Activated CD4-positive, alpha-beta T cell treated with anti-CD3 and anti-CD28 coated beads, Interleukin-2, amount 10 ng/mL, durations not matched to agents 24 days and 14 days (primary cell): ENCODE measurements at regions of chr19 and their contacts with region 1.

Region 1: DNA sequence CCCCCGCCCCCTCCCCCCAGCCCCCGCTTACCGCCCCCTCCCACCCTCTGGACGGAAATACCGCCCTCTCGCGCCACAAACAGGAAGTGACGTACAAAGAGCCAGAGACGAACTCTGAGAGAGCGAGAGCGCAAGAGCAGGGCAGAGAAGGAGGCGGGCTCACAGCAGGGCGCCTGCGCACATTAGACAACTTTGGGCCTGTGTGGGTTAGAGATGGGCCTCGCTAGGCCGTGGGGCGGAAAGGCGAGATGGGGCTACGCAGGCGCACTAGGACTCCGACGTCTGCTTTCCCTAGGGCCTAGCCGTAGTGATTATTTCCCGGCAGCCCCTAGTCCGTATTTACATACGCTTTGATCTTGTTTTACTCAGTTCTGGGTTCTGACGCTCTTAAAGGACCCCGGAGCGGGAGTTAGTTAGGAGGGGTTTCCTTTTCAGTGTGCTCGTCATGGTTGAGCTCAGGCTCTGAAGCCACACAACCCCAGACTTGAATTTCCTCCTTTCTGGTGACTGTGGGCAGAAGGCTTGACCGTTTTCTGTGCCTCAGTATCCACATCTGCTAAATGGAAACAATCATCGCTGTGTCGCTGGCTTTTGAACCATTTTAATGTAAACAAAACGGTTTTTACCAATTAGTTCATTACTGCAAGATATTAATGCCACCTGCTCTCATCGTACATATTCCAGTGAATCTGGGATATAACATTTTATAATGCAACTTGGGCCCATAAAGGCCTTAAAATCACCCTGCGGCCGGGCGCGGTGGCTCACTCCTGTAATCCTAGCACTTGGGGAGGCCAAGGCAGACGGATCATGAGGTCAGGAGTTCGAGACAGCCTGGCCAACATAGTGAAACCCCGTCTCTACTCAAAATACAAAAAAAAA is 449 bp upstream of the AKT2 start:
- DNase-seq: peak; percentile 99
- H3K4me3 Mint-ChIP-seq: peak overlapping the region; percentile 99
- H3K27ac Mint-ChIP-seq: peak overlapping the region; percentile 99
- H3K4me1 Mint-ChIP-seq: peaks cover 37% of the 10 kb centered on the region
- H3K27me3 Mint-ChIP-seq: peaks cover 2% of the 10 kb centered on the region

Region 2: DNA sequence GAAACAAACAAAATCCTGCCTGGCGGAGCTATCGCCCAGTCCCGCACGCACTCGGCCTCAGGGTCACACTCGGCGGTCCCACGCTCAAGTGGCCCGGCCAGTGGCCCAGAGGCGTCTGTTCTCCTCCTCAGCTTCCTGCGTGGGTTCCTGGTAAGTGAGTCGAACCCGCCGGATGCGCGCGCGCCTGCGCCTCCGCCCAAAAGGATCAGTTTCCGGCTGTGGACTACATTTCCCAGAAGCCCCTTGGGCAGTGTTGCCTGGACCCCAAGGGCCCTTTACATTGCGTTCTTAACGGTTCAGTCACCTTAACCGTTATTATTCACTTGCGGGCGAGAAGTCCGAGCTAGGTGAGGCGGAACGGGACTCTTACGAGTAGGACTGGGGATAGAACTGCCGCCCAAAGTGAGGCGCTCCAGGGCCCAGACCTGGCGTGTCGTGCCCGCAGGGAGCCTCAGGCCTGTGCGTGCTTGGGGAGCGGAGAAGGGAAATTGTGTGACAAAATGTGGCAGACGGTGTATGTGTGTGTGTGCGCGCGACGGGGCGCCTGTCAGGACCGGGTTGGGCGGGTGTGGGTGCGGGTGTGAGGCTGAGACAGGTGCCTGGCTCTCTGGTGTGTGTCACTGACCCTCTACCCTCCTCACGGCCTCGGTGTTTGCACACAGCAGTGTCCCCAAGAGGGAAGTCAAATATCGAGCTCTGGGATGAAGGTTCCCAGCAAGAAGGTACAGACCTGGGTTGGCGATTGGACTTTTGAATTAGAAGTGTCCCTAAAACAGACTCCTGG is 288.6 kb before region 1 on chr19 and contains the start of gene ZNF546:
- intact Hi-C with region 1: loop called (anchors 10 kb)
- DNase-seq: peak; percentile 97
- H3K4me3 Mint-ChIP-seq: peak within 1 kb of the TSS; percentile 90
- H3K27ac Mint-ChIP-seq: peak within 1 kb of the TSS; percentile 95
- H3K4me1 Mint-ChIP-seq: peaks cover 24% of the 10 kb centered on the region
- H3K27me3 Mint-ChIP-seq: no peaks in the 10 kb centered on the region
- total RNA-seq, gene ZNF546: 4.4 and 6.7 TPM in 2 replicates

Region 3: GRCh38 chr19:40190891-40191835 is 94.4 kb before region 1 on chr19 and contains the start of gene MAP3K10:
- intact Hi-C with region 1: loop called (anchors 2 kb)
- DNase-seq: peak; percentile 94
- H3K4me3 Mint-ChIP-seq: peak within 1 kb of the TSS; percentile 90
- H3K27ac Mint-ChIP-seq: peak within 1 kb of the TSS; percentile 96
- H3K4me1 Mint-ChIP-seq: peaks cover 26% of the 10 kb centered on the region
- H3K27me3 Mint-ChIP-seq: no peaks in the 10 kb centered on the region
- total RNA-seq, gene MAP3K10: 16.6 and 17.6 TPM in 2 replicates

Region 4: DNA sequence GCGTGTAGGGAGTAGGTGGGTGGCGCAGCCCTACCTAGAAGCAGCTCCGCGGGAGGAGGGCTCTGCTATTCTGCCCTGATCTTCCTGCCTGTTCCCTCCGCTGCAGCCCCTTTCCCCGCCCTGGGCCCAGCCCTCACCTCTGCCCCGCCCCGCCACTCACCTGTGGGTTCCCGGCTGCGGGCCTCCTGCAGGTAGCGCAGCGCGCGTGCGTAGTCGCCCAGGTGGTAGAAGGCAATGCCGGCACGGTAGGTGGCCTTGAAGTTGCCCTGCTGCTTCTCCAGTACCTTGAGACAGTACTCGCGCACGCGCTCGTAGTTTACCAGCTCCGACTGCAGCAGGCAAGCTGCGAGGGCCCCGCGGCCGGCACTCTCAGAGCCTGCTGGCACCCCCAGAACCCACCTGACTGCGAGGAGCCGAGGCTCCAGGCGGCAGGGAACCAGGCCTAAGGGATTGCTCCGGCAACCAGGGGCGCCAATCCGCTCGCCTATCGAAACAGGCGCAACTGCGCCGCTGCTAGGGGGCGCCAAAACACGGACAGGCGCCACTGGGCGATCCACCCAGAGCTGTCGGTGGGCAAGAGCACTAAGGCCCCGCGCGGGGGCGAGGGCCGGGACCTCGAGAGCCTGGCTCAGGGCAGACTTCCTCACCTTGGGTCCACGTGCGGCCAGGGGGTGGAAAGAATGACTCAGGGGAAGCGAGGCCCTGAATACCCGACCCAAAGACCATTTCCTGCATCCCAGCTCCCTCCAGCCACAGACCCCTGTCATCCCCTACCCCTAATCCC is 68.4 kb before region 1 on chr19:
- intact Hi-C with region 1: no loop called
- DNase-seq: peak; percentile 73
- H3K4me3 Mint-ChIP-seq: peak overlapping the region; percentile 26
- H3K27ac Mint-ChIP-seq: no peak overlapping the region
- H3K4me1 Mint-ChIP-seq: peaks cover 8% of the 10 kb centered on the region
- H3K27me3 Mint-ChIP-seq: peaks cover 35% of the 10 kb centered on the region

Region 5: GRCh38 chr19:40348125-40348913 is 62.7 kb after region 1 on chr19 and contains the starts of genes C19orf47 and PLD3:
- intact Hi-C with region 1: loop called (anchors 1 kb)
- DNase-seq: peak; percentile 100
- H3K4me3 Mint-ChIP-seq: peak within 1 kb of the TSS; percentile 88
- H3K27ac Mint-ChIP-seq: peak within 1 kb of the TSS; percentile 87
- H3K4me1 Mint-ChIP-seq: peaks cover 23% of the 10 kb centered on the region
- H3K27me3 Mint-ChIP-seq: peaks cover 2% of the 10 kb centered on the region
- total RNA-seq, gene C19orf47: 24.4 and 28.9 TPM in 2 replicates
- total RNA-seq, gene PLD3: 49.4 and 52.2 TPM in 2 replicates

Region 6: GRCh38 chr19:40425450-40426287 is 140.1 kb after region 1 on chr19 and contains the start of gene SERTAD1:
- intact Hi-C with region 1: loop called (anchors 2 kb)
- DNase-seq: peak; percentile 100
- H3K4me3 Mint-ChIP-seq: peak within 1 kb of the TSS; percentile 92
- H3K27ac Mint-ChIP-seq: peak within 1 kb of the TSS; percentile 91
- H3K4me1 Mint-ChIP-seq: peaks cover 26% of the 10 kb centered on the region
- H3K27me3 Mint-ChIP-seq: peaks cover 5% of the 10 kb centered on the region
- total RNA-seq, gene SERTAD1: 19.3 and 20.8 TPM in 2 replicates

Region 7: GRCh38 chr19:40570313-40571004 is 284.9 kb after region 1 on chr19:
- intact Hi-C with region 1: loop called (anchors 1 kb)
- DNase-seq: peak; percentile 99
- H3K4me3 Mint-ChIP-seq: peak overlapping the region; percentile 63
- H3K27ac Mint-ChIP-seq: peak overlapping the region; percentile 60
- H3K4me1 Mint-ChIP-seq: peaks cover 9% of the 10 kb centered on the region
- H3K27me3 Mint-ChIP-seq: peaks cover 32% of the 10 kb centered on the region

Region 8: DNA sequence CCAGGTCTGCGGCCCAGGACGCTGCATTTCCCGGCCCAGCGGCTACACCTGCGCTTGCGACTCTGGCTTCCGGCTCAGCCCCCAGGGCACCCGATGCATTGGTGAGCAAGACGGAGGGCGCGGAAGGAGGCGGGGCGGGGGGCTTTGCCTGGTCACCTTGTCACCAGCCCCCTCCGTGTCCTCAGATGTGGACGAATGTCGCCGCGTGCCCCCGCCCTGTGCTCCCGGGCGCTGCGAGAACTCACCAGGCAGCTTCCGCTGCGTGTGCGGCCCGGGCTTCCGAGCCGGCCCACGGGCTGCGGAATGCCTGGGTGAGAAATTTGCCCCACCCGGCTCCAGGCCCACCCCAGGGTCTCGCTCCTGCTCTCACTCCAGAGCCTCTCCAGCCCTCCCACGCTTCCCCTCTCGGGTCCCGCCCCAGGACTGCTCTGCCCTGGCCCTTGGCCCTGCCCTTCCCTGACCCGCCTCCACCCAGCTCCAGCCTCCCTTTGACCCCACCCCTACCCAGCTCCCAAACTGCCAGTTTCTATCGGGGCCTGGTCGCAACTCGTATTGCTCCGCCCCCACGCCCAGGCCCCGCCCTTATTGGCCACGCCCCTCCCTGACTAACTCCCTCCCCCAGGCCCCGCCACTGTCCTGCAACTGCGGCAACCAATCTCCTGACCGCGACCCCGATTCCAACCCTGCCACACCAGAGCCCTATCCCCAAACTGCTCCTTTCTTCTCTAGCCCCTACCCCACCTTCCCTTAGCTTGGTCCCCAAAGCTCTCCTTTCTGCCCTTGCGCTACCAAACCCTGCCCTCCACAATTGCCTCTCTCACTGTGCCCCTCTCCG is 324.2 kb after region 1 on chr19:
- intact Hi-C with region 1: loop called (anchors 10 kb)
- DNase-seq: peak; percentile 97
- H3K4me3 Mint-ChIP-seq: peak overlapping the region; percentile 95
- H3K27ac Mint-ChIP-seq: peak overlapping the region; percentile 97
- H3K4me1 Mint-ChIP-seq: peaks cover 43% of the 10 kb centered on the region
- H3K27me3 Mint-ChIP-seq: no peaks in the 10 kb centered on the region